ENCODE measurements at regions of chr17 and their contacts with region 1.

Region 1: DNA sequence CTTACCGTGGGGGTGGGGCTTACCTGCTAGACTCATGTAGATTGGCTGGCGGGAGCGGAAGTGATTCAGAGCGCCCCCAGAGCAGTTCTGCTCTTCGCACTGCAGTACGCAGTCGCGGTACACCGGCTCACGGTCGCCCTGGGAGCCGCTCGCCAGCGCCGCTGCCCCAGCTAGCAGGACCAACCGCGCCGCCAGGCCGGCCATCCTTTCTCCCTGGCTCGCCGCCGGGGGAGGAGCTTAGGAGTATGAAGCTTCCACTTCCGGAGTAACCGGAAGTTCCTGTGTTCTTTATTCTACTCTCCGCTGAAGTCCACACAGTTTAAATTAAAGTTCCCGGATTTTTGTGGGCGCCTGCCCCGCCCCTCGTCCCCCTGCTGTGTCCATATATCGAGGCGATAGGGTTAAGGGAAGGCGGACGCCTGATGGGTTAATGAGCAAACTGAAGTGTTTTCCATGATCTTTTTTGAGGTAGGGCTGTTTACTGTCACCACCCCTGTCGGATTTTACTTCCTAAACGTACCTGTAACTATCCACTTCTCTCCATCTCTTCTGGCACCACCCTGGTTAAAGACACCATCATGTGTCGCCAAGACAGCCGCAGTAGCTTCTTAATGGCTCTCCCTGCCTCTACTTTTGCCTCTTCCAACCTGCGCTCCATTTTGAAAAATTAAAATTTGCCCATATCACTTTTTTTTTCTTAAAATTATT is at the start of gene PGAP3:
- DNase-seq: peak; percentile 93 to 94
- ATAC-seq: peak; percentile 93
- H3K4me3 ChIP-seq: peak within 1 kb of the TSS; percentile 17 to 65
- H3K27ac ChIP-seq: peak within 1 kb of the TSS in 1 of 2 donors; percentile 90
- H3K4me1 ChIP-seq: peaks cover 0 to 1% of the 10 kb centered on the region in 2 donors
- H3K27me3 ChIP-seq: no peaks in the 10 kb centered on the region
- total RNA-seq, gene PGAP3: 21.9 to 22.0 TPM

Region 2: GRCh38 chr17:39699818-39700147 is 11.8 kb after region 1 on chr17 and contains the start of gene ERBB2:
- intact Hi-C with region 1: loop called in 1 of 2 experiments (anchors 1 kb)
- DNase-seq: peak; percentile 79 to 88
- ATAC-seq: peak; percentile 88
- H3K4me3 ChIP-seq: peak within 1 kb of the TSS; percentile 95 to 96
- H3K27ac ChIP-seq: peak within 1 kb of the TSS; percentile 88 to 91
- H3K4me1 ChIP-seq: no peaks in the 10 kb centered on the region
- H3K27me3 ChIP-seq: no peaks in the 10 kb centered on the region
- total RNA-seq, gene ERBB2: 73.0 to 74.0 TPM

Measured in aorta (tissue), 5 donors.